Head of caudate nucleus (tissue), 42 donors: ENCODE measurements at regions of chr11 and their contacts with region 1.

Region 1: DNA sequence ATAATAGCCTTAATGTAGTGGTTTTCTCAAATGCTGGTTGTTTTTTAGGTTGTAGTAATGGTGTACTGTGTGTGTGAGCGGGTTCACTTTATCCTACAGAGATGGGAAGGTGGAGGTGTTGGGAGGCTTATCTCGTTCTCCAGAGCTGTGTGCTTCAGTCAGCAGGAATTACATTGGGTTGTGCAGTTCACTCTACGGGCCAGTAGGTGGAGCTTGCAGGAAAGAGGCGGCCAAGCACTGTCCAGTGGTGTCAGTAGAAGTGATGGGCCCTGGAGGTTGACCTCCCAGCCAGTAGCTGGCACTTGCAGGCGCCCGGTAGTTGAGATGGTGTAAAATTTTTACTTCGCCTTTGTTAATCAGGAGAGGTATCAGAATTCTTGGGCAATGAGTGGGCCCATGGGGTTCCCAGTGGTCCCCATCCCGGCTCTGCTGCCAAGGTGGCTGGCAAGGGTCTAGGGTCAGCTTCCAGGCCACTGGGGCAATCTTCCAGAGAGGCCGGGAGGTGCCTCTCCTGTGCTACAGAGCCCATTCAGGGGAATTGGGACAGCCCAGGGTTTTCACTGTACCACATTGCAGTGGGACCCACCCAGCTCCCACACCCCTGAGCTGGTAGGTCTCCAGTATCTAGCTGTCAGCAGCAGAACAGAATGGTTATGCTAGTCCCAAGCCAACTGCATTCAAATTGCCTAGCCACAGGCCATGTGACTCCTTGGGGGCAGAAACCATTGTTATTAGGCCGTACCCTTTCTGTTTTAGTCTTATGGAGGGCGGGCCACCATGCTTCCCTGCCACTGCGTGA is 43.9 kb downstream of the BIRC2 start:
- DNase-seq: peak; percentile 54 to 91 (median 80)

Region 2: GRCh38 chr11:102332611-102332994 is 58.3 kb before region 1 on chr11:
- intact Hi-C with region 1: no loop called
- DNase-seq: no peak

Region 3: DNA sequence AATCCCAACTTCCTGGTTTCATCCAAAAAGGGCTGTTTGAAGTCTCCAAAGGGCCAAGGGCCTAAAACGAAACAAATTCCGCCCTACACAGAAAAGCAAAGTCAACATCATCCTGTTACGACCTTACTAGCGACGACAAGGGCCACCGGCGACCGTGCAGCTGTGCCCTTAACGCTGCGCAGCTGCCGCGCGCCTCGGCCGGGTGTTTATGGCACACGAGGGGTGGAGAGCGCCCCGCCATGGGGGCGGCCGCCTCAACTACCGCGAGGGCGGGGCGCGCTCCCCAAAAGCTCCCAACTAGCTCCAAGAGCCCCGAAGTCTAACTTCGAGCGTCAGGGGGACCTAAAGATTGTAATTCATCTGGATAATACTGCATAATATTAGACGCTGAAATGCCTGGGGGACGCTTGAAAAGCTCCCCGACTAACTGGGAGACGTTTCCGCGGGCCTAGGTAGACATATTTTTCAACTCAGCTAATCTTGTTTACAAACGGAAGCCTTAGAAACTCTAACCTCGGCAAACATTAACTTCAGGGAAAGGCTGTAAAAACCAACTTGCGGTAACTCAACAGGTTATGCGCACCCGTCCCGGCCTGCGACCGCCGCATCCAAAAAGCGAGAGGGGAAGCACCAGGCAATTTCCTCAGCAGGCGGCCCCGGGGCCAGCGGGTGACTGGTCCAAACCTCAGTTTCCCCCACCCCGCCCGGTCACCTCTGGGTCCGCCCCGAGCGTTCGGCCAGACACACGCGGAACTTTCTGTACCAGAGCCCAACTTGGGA is 61.0 kb after region 1 on chr11:
- intact Hi-C with region 1: loop called (anchors 5 kb)
- DNase-seq: peak; percentile 56 to 89 (median 78)

Region 4: DNA sequence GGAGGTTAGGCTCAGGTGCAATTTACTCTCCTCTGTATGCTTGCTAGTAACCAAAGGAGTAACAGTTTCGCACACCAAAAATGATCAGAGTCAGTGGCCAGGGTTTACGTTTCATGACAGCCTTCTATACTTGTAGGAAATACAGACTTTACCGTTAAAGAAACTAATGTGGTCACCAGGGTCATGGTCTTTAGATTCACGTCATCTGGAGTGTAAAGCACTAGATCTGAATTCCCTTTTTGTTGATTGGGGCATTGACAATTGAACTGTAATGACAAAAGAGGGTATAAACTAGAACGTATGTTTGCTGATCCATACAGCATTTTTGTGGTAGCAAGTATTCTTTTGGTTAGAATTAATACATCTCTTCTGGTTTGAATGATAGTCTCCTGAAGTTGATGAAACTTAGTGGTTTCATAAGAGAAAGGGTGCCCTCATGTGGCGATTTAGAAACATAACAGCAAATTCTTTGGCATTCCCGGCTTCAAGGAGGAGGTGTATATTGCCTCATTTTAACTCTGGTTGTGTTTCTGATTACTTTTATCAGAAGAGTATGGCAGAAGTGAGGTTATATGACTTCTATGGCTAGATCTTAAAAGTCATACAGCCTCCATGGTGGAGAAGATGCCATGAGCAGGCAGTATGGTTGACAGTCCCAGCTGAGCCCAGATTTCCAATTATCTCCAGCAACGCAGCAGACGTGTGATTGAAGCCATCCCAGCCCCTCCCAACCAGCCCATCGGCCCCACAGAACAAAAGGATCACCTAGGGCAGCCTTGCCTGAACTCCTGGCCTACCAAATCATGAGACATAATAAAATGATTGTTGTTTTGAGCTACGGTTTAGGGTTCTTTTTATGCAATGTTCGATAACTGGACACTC is 104.5 kb after region 1 on chr11:
- intact Hi-C with region 1: loop called (anchors 1 kb)
- DNase-seq: peak in 24 of 42 donors; percentile 12 to 82 (median 52)